B cell (primary cell): ENCODE measurements at regions of chr1 and their contacts with region 1.

Region 1: DNA sequence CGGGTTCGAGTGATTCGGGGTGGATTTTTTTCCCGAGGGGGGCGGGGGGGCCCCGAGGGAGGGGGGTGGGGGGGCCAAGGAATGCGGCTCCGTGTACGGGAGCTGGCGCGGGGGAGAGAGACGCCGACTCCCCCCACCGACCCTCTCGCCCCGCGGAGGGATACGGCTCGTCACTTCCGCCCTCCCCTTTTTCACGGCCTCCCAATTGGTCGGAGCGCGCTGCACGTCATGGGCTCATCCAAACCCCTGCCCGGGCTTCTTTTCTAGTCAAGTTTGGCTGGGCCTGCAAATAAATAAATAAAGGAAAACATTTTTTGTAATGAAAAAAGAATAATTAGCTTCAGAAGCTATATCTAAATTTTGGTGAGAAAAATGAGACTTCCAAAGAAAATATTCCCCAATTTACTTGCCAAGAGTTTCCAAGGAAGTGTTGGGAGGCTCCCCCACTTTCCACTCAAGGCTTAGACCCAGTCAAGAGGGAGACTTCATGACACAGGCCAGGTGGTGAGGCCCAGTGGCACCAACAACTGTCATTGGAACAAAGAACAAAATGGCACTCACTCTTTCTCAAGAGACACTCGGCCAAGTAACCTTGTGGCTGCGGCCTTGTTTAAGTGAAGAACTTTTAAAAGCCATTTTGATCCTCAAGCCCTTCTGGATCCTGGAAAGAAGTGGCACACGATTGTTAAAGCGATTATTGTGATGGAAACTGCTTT is at the start of gene POGZ:
- DNase-seq: peak; percentile 93
- ATAC-seq: peak; percentile 72
- H3K4me3 ChIP-seq: peak within 1 kb of the TSS; percentile 74 to 94 (median 83)
- H3K4me3 Mint-ChIP-seq: peak within 1 kb of the TSS; percentile 89
- H3K27ac ChIP-seq: peak within 1 kb of the TSS; percentile 84 to 85
- H3K27ac Mint-ChIP-seq: peak within 1 kb of the TSS; percentile 98
- H3K4me1 ChIP-seq: peaks cover 16 to 27% of the 10 kb centered on the region in 2 donors
- H3K4me1 Mint-ChIP-seq: peaks cover 30% of the 10 kb centered on the region
- H3K27me3 ChIP-seq: peaks cover 0 to 19% (median 9%) of the 10 kb centered on the region in 4 experiments
- H3K27me3 Mint-ChIP-seq: peaks cover 16% of the 10 kb centered on the region
- CTCF ChIP-seq: no peak
- total RNA-seq, gene POGZ: 188 and 194 TPM in 2 replicates

Region 2: GRCh38 chr1:150256198-150256553 is 1203.3 kb before region 1 on chr1:
- CTCF ChIA-PET with region 1: no interaction called
- POLR2A ChIA-PET with region 1: no interaction called
- intact Hi-C with region 1: no loop called
- DNase-seq: no peak
- ATAC-seq: no peak
- H3K4me3 ChIP-seq: peak overlapping the region in 1 of 5 experiments; percentile 37
- H3K4me3 Mint-ChIP-seq: peak overlapping the region; percentile 78
- H3K27ac ChIP-seq: no peak overlapping the region
- H3K27ac Mint-ChIP-seq: no peak overlapping the region
- H3K4me1 ChIP-seq: peaks cover 14 to 15% of the 10 kb centered on the region in 2 donors
- H3K4me1 Mint-ChIP-seq: peaks cover 13% of the 10 kb centered on the region
- H3K27me3 ChIP-seq: peaks cover 0 to 36% (median 24%) of the 10 kb centered on the region in 4 experiments
- H3K27me3 Mint-ChIP-seq: peaks cover 45% of the 10 kb centered on the region
- CTCF ChIP-seq: no peak

Region 3: DNA sequence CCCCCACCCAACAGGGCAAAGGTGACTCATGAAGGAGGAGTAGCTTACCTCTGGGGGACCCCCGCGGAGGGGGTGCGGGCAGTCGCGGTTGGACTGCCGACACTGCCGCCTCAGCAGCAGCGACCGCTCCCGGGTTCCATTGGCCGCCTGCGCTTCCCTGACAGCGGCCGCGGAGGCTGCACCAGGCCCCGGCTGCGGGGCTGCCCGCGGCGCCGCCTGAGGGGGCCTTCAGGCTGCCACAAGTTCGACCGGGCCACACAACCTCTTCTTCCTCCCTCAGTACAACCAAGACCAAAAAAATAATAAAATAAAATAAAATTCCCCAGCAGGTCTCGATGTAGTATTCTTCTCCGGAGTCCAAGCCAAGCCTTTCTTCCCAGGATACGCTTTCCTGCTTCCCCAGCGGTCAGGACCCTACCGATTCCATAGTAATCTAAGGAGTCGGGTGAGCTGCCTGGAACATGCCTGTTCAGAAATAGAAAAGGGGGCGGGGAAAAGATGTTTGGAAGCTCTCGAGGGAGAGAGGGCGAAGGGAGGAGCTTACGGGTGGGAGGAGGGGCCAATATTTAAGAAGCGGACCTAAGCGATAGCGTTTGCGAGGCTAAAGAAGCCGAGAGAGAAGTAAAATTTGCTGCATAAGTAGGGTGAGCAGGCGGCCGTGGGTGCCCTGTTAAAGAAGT is 132.1 kb before region 1 on chr1 and contains the start of gene PI4KB:
- CTCF ChIA-PET with region 1: no interaction called
- POLR2A ChIA-PET with region 1: interaction called, 3 read pairs
- intact Hi-C with region 1: loop called (anchors 5 kb)
- DNase-seq: peak; percentile 97
- ATAC-seq: peak; percentile 93
- H3K4me3 ChIP-seq: peak within 1 kb of the TSS; percentile 72 to 99 (median 90)
- H3K4me3 Mint-ChIP-seq: peak within 1 kb of the TSS; percentile 93
- H3K27ac ChIP-seq: peak within 1 kb of the TSS; percentile 87 to 89
- H3K27ac Mint-ChIP-seq: peak within 1 kb of the TSS; percentile 96
- H3K4me1 ChIP-seq: peaks cover 21 to 26% of the 10 kb centered on the region in 2 donors
- H3K4me1 Mint-ChIP-seq: peaks cover 40% of the 10 kb centered on the region
- H3K27me3 ChIP-seq: no peaks in the 10 kb centered on the region
- H3K27me3 Mint-ChIP-seq: no peaks in the 10 kb centered on the region
- CTCF ChIP-seq: no peak
- total RNA-seq, gene PI4KB: 110 TPM in 2 replicates

Region 4: GRCh38 chr1:151399890-151400495 is 59.5 kb before region 1 on chr1:
- CTCF ChIA-PET with region 1: interaction called, 3 read pairs
- POLR2A ChIA-PET with region 1: no interaction called
- intact Hi-C with region 1: loop called (anchors 2 kb)
- DNase-seq: no peak
- ATAC-seq: peak; percentile 7
- H3K4me3 ChIP-seq: peak overlapping the region; percentile 91 to 97 (median 92)
- H3K4me3 Mint-ChIP-seq: peak overlapping the region; percentile 93
- H3K27ac ChIP-seq: peak overlapping the region; percentile 88 to 95
- H3K27ac Mint-ChIP-seq: peak overlapping the region; percentile 95
- H3K4me1 ChIP-seq: peaks cover 8 to 21% of the 10 kb centered on the region in 2 donors
- H3K4me1 Mint-ChIP-seq: peaks cover 26% of the 10 kb centered on the region
- H3K27me3 ChIP-seq: no peaks in the 10 kb centered on the region
- H3K27me3 Mint-ChIP-seq: no peaks in the 10 kb centered on the region
- CTCF ChIP-seq: no peak

Region 5: GRCh38 chr1:151472856-151473731 is 13.6 kb after region 1 on chr1:
- CTCF ChIA-PET with region 1: interaction called, 11 read pairs
- POLR2A ChIA-PET with region 1: interaction called, 24 read pairs
- intact Hi-C with region 1: loop called (anchors 1 kb)
- DNase-seq: peak; percentile 70
- ATAC-seq: peak; percentile 45
- H3K4me3 ChIP-seq: peak overlapping the region in 4 of 5 experiments; percentile 51 to 68 (median 60)
- H3K4me3 Mint-ChIP-seq: peak overlapping the region; percentile 82
- H3K27ac ChIP-seq: peak overlapping the region; percentile 26 to 62
- H3K27ac Mint-ChIP-seq: peak overlapping the region; percentile 86
- H3K4me1 ChIP-seq: peaks cover 0 to 12% of the 10 kb centered on the region in 2 donors
- H3K4me1 Mint-ChIP-seq: peaks cover 7% of the 10 kb centered on the region
- H3K27me3 ChIP-seq: peaks cover 0 to 2% (median 0%) of the 10 kb centered on the region in 4 experiments
- H3K27me3 Mint-ChIP-seq: peaks cover 12% of the 10 kb centered on the region
- CTCF ChIP-seq: no peak

Region 6: DNA sequence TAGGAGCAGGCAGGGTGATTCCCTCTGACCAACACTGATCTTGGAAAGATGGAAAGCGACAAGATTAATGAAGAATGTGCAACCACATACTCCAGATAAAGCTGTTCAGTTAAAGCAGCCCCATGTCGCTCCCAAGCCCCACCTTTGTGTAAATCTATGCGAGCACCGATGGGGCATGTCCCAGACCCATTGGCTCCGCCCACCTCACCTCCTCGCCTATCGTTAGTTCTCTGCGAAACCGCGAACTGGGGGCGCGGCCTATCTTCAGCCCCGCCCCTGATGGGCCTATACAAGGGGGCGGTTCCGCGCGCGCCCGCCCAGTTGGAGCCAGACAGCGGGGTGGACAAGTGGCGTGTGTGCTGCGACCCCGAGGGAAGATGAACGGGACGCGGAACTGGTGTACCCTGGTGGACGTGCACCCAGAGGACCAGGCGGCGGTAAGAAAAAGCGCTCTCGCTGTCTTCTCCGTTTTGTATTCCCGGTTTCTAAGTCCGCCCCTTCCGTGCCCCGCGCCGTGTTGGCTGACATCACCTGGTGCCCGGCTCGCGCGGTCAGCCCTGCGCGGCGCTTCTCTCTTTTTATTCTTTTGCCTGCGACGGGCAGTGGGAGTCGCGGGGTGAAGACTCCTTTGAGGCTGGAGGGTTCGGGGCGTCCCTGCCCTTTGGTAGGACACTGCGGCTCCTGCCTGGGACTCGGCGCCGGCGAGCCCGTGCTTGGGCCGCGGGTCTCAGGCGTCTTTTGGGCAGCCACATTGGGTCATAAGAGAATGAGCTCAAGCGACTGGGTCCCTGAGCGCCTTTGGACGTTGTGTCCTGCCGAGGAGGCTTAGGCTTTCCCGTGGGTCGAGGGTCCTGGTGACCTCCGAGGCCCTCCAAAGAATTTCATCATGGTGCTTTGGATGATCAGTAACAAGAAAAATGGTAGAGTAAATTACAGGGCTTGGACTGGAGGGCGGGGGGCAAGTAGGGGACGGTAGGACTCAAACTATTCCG is 80.8 kb after region 1 on chr1 and contains the start of gene TUFT1:
- CTCF ChIA-PET with region 1: no interaction called
- POLR2A ChIA-PET with region 1: interaction called, 7 read pairs
- intact Hi-C with region 1: loop called (anchors 1 kb)
- DNase-seq: peak; percentile 96
- ATAC-seq: peak; percentile 99
- H3K4me3 ChIP-seq: peak within 1 kb of the TSS; percentile 39 to 85 (median 75)
- H3K4me3 Mint-ChIP-seq: peak within 1 kb of the TSS; percentile 98
- H3K27ac ChIP-seq: peak within 1 kb of the TSS; percentile 54 to 61
- H3K27ac Mint-ChIP-seq: peak within 1 kb of the TSS; percentile 89
- H3K4me1 ChIP-seq: peaks cover 15 to 22% of the 10 kb centered on the region in 2 donors
- H3K4me1 Mint-ChIP-seq: peaks cover 19% of the 10 kb centered on the region
- H3K27me3 ChIP-seq: peaks cover 0 to 21% (median 10%) of the 10 kb centered on the region in 4 experiments
- H3K27me3 Mint-ChIP-seq: peaks cover 14% of the 10 kb centered on the region
- CTCF ChIP-seq: no peak
- total RNA-seq, gene TUFT1: 2.2 TPM in 2 replicates

Region 7: DNA sequence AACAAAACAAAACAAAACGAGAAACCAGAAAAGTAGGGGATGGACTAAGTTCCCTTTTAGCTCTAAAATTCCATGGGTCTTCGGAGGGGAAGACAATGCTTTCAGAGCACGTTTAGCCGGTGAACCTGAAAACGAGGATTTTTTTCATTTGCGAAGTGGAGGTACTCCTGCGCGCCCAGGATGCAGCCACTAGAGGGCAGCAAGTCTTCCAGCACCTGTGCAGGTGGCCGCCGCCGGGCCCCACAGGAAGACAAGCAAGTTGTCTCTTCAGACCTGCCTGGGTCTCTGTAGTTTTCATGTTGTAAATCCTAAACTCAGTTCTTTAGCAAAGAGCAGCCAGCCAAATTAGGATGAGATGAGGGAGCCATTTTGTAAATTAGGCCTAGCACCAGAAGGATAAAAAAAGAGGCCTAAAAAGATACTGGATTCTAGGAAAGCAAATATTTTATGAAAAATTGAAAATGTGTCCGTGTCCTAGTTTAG is 134.7 kb after region 1 on chr1:
- CTCF ChIA-PET with region 1: no interaction called
- POLR2A ChIA-PET with region 1: no interaction called
- intact Hi-C with region 1: no loop called
- DNase-seq: peak; percentile 87
- ATAC-seq: peak; percentile 97
- H3K4me3 ChIP-seq: peak overlapping the region in 4 of 5 experiments; percentile 21 to 41 (median 30)
- H3K4me3 Mint-ChIP-seq: peak overlapping the region; percentile 71
- H3K27ac ChIP-seq: no peak overlapping the region
- H3K27ac Mint-ChIP-seq: peak overlapping the region; percentile 0
- H3K4me1 ChIP-seq: peaks cover 7 to 9% of the 10 kb centered on the region in 2 donors
- H3K4me1 Mint-ChIP-seq: peaks cover 9% of the 10 kb centered on the region
- H3K27me3 ChIP-seq: peaks cover 0 to 3% (median 0%) of the 10 kb centered on the region in 4 experiments
- H3K27me3 Mint-ChIP-seq: peaks cover 11% of the 10 kb centered on the region
- CTCF ChIP-seq: peak; percentile 94

Region 8: DNA sequence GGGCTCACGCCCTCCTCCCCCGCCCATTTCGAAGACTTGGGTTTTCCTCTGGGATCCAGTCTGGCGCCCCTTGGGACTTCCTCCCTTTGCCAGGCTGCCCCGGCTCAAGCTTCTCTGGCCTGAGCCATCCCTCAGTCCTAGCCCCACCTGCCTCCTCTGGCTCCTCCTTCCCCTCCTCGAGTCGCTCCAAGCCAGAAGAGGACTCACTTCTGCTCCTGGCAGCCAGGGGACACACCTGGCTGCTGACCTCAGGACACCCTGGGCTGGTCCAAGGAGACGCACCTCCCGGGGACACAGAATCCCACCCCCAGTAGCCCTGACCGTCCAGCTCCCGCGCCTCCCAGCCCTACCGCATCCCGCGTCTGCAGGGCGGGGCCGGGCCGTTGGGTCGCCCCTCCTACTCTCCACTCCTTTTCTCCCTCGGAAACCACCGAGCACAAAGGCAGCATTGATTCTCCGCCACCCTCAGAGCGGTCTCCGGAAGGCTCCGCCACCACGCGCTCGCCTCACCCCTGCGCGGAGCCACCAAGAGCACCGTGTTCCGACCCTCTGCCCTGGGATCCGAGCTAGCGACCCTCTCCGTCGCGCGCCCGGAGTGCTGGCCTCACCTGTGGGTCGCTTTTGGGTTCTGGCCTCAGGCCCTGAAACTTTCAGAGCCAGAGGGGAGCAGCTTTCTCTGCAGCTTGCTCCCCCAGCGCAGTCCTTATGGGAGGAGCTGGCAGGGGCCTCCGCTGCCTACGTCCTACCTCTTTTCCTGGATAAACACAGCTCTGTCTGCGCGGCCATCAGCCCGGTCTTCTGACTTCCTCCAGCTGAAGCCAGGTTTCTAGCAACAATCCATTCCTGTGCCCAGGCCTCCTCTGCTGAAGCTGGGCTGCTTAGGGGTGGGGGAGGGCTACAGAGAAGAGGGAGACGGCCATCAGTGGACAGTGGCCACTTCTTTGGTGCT is 380.2 kb after region 1 on chr1 and contains the start of gene C2CD4D:
- CTCF ChIA-PET with region 1: interaction called, 3 read pairs
- POLR2A ChIA-PET with region 1: no interaction called
- intact Hi-C with region 1: loop called (anchors 5 kb)
- DNase-seq: peak; percentile 78
- ATAC-seq: peak; percentile 53
- H3K4me3 ChIP-seq: peak within 1 kb of the TSS in 4 of 5 experiments; percentile 36 to 56 (median 44)
- H3K4me3 Mint-ChIP-seq: peak within 1 kb of the TSS; percentile 87
- H3K27ac ChIP-seq: no peak within 1 kb of the TSS
- H3K27ac Mint-ChIP-seq: peak within 1 kb of the TSS; percentile 81
- H3K4me1 ChIP-seq: peaks cover 36 to 41% of the 10 kb centered on the region in 2 donors
- H3K4me1 Mint-ChIP-seq: peaks cover 38% of the 10 kb centered on the region
- H3K27me3 ChIP-seq: peaks cover 0 to 20% (median 7%) of the 10 kb centered on the region in 4 experiments
- H3K27me3 Mint-ChIP-seq: peaks cover 10% of the 10 kb centered on the region
- CTCF ChIP-seq: no peak
- total RNA-seq, gene C2CD4D: not detected in 2 replicates